Dorsolateral prefrontal cortex (tissue), 120 donors: ENCODE measurements at regions of chr6 and their contacts with region 1.

Region 1: DNA sequence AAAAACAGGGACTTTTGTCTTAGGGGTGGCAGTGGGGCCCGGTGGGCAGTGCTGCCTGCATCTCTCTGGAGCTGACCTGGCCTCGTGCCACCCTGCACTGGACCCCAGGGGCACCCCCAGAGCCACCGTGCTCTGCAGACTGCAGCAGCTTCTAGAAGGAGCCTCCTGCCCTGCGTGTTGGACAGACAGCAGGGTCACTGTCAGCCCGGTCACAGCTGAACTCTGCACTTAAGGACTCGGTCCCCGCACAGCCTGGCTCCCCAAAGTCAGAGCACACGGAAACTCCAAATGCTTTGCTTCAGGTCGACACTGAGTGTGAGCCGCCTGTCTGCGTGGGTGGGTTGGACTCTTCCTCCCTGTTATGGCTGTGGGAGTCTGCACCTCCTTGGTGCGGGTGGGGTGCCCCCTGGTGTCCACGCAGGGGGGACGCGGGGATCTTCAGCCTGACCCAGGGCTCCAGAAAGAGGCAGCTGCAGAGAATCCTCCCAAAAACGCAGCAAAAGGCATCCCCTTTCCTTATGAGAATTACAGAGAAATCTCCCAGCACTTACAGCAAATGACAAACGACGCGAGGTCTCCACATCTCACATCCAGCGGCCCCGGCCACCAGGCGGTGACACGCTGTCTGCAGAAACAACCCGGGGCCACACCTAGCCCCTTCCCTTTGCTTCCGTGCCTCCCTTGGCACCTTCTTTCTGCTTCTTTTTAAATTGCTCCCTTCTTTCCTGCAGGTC is 36.3 kb upstream of the DACT2 start:
- DNase-seq: peak in 7 of 10 donors; percentile 47 to 81 (median 64)
- H3K4me3 ChIP-seq: peak overlapping the region in 9 of 59 donors; percentile 9 to 48 (median 24)
- H3K27ac ChIP-seq: no peak overlapping the region
- H3K27me3 ChIP-seq: peaks cover 0 to 8% (median 0%) of the 10 kb centered on the region in 45 donors
- CTCF ChIP-seq: peak in 55 of 56 donors; percentile 44 to 88 (median 77)

Region 2: DNA sequence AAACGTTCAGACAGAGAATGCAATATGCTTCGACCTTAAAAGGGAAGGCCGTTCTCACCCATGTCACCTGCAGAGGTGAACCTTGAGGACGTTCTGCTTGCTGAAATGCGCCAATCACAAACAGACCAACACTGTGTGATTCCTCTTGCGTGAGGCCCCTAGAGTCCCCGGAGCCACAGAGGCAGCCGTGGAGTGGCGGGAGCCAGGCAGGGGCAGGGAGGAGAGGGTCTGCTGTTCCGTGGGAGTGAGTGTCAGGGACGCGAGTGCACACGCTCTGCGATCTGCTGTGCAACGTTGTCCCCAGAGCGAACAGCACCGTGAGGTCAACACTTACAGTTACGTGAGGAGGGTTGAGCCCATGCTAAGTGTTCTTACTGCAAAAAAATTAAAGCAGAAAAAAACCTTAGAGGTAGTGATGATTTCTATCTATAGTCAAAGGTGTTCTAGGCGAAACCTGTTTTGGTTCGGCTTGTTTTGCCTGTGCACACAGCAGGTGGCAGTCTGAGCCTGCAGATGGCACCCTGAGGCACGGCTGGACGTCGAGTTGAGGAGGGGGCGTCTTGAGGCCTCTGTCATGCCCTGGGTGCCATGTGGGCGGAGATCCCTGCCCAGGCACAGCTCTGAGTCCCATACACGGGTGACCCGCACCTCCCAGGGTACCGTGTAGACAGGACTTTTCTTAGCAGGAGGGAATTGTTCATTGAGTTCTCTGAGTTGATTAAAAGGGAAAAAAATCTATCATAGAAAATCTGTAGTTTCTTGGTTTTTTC is 205.1 kb before region 1 on chr6:
- intact Hi-C with region 1: loop called (anchors 1 to 5 kb)
- DNase-seq: peak in 1 of 10 donors; percentile 29
- H3K4me3 ChIP-seq: no peak overlapping the region
- H3K27ac ChIP-seq: no peak overlapping the region
- H3K27me3 ChIP-seq: peaks cover 0 to 42% (median 15%) of the 10 kb centered on the region in 45 donors
- CTCF ChIP-seq: peak in 53 of 56 donors; percentile 31 to 78 (median 57)

Region 3: GRCh38 chr6:168226061-168226752 is 129.7 kb before region 1 on chr6:
- intact Hi-C with region 1: loop called (anchors 1 to 10 kb)
- DNase-seq: peak in 2 of 10 donors; percentile 10 to 52
- H3K4me3 ChIP-seq: peak overlapping the region in 5 of 59 donors; percentile 9 to 43 (median 15)
- H3K27ac ChIP-seq: no peak overlapping the region
- H3K27me3 ChIP-seq: peaks cover 0 to 28% (median 0%) of the 10 kb centered on the region in 45 donors
- CTCF ChIP-seq: peak in 26 of 56 donors; percentile 14 to 66 (median 31)